Left ventricle myocardium superior (tissue), 1 donor: ENCODE measurements at regions of chr19 and their contacts with region 1.

Region 1: DNA sequence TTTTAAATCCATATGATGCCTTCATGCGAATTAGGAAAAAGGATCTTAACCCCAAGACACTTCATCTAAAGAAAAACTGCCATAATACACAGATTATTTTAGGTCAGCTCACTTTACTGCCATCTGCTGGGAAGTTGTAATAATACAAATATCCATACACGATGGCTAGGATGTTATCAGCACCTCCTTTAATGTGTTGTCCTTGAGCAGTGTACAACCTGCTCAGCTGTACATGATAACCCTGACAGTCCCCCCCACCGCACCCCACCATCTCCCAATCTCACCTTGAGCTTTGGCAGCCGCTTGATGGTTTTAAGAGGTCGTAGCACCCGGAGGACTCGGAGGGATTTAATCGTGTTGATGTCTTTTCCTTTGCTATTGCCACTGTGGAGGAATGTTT is 112.2 kb downstream of the IER2 start:
- DNase-seq: no peak
- ATAC-seq: peak; percentile 63

Region 2: GRCh38 chr19:12974301-12975220 is 287.9 kb before region 1 on chr19:
- intact Hi-C with region 1: loop called (anchors 5 kb)
- DNase-seq: no peak
- ATAC-seq: no peak

Region 3: DNA sequence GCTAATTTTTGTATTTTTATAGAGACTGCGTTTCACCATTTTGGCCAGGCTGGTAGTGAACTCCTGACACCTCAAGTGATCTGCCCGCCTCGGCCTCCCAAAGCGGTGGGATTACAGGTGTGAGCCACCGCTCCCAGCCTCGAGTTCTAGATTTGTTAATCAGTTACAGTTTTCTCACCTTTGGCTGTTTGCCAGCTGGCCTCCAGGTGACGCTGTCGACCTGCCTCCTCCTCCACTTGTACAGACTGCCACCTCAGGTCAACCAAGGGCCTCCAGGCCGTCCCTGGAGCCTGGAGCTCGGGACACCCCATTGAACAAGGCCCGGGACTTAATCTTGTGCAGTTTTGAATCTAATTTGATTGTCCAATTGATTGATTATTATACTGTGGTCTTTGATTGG is 66.8 kb before region 1 on chr19:
- intact Hi-C with region 1: loop called (anchors 5 kb)
- DNase-seq: no peak
- ATAC-seq: no peak